ENCODE measurements at regions of chr20 and their contacts with region 1.

Region 1: GRCh38 chr20:44747166-44748004 is 1.7 kb downstream of the KCNK15 start:
- DNase-seq: peak; percentile 67
- H3K4me3 ChIP-seq: no peak overlapping the region
- H3K27ac ChIP-seq: no peak overlapping the region
- H3K4me1 ChIP-seq: peaks cover 48% of the 10 kb centered on the region
- H3K27me3 ChIP-seq: peaks cover 35% of the 10 kb centered on the region
- CTCF ChIP-seq: peak; percentile 80

Region 2: GRCh38 chr20:44692932-44693476 is 54.4 kb before region 1 on chr20:
- intact Hi-C with region 1: no loop called
- DNase-seq: peak; percentile 78
- H3K4me3 ChIP-seq: no peak overlapping the region
- H3K27ac ChIP-seq: peak overlapping the region; percentile 91
- H3K4me1 ChIP-seq: peaks cover 75% of the 10 kb centered on the region
- H3K27me3 ChIP-seq: no peaks in the 10 kb centered on the region
- CTCF ChIP-seq: no peak

Region 3: DNA sequence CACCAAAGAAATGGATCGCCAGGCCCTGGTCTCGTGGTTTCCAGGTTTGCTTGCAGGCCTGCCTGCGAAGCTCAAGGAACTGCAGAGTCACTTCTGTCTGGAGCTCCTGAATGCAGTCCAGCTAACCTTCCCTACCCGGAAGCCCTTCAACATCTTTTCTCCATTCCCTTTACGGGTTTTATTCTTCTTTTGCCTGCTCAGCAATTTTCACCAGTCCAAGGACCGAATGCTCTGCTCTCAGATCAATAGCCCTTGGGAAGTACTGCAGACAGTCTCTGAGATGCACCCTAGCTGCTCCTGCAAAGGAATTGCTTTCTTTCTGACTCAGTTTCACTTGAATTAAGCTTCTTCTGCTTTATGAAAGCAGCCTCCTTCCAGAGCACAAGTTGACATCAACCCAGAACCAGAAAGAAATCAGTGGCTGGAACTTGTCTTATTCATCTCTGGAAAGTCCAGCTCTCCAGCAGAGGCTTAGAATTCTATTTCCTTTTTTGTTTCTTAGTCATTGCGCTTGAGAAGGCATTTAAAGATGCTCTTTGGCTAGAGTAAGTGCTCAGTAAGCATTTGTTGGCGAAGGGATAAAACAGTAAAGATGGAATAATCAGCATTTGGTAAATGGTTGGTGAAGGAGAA is 119.4 kb after region 1 on chr20:
- intact Hi-C with region 1: loop called (anchors 5 kb)
- DNase-seq: no peak
- H3K4me3 ChIP-seq: no peak overlapping the region
- H3K27ac ChIP-seq: no peak overlapping the region
- H3K4me1 ChIP-seq: peaks cover 28% of the 10 kb centered on the region
- H3K27me3 ChIP-seq: no peaks in the 10 kb centered on the region
- CTCF ChIP-seq: no peak

Measured in left ventricle myocardium inferior (tissue), 1 donor.